Posterior cingulate gyrus (tissue), 11 donors: ENCODE measurements at regions of chr11 and their contacts with region 1.

Region 1: GRCh38 chr11:30143098-30143705 is 87.6 kb upstream of the FSHB start:
- DNase-seq: no peak

Region 2: GRCh38 chr11:29448246-29448877 is 694.8 kb before region 1 on chr11:
- intact Hi-C with region 1: loop called (anchors 5 kb)
- DNase-seq: peak in 1 of 10 donors; percentile 47

Region 3: GRCh38 chr11:30113326-30113873 is 29.8 kb before region 1 on chr11:
- intact Hi-C with region 1: no loop called
- DNase-seq: no peak